ENCODE measurements at regions of chr5 and their contacts with region 1.

Region 1: DNA sequence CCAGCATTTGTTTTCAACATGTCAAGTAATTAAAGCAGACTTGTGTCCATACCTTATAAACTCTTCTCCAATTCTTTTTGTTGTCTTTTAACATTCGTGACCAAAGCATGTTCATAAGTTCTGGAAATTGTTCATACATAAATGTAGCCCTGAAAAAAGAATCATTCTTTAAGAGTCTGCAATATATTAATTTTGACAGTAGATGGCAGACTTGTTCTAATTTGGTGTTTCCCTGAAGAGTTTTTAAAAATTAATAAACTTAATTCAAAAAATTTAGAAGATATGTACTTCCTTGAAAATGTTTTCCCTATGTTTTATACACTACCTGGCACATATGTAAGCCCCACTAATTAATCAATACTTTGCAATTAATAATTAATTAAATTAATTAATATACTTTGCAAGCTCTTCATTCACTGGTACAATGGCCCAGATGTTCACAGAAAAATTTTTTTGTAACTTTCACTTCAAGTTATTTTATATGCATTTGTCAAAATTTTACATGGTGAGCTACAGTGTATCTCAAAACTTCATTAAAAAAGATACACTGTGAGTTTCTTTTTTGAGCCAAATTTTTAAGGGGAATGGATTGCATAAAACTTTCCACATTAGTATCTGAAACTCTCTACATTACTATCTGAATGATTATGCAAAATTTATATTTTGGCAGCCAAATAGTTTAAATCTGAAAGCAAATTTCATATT is 42.1 kb downstream of the CLINT1 start:
- DNase-seq: no peak
- ATAC-seq: no peak
- H3K4me3 ChIP-seq: no peak overlapping the region
- H3K27ac ChIP-seq: no peak overlapping the region
- H3K4me1 ChIP-seq: peaks cover 4% of the 10 kb centered on the region
- H3K27me3 ChIP-seq: no peaks in the 10 kb centered on the region
- CTCF ChIP-seq: peak; percentile 60

Region 2: GRCh38 chr5:157994906-157995519 is 178.2 kb after region 1 on chr5:
- intact Hi-C with region 1: loop called (anchors 10 kb)
- DNase-seq: peak; percentile 79
- ATAC-seq: peak; percentile 98
- H3K4me3 ChIP-seq: no peak overlapping the region
- H3K27ac ChIP-seq: no peak overlapping the region
- H3K4me1 ChIP-seq: peaks cover 4% of the 10 kb centered on the region
- H3K27me3 ChIP-seq: no peaks in the 10 kb centered on the region
- CTCF ChIP-seq: peak; percentile 74

Region 3: DNA sequence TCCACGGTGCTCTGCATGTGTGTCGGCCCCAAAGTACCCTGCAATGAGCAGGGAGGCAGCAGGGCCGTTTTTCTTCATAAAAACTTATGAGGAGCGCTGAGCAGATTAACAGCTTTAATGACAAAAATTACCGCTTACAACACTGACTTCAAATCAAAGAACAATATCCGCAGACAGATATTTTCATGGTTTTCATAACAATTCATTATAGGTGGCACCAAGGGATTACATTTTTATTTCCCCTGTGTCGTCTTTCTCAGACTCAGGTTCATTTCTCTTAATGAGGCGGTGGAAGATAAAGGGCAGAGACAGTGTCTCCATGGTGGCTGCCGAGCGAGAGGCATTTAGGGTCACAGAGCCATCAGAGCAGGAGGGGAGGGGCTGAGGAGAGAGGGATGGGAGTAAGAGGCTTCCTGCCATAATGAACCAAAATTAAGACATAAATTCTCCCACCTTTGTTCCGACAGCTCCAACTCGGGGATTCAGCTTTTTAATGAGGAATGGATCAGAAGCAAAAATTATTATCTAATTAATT is 282.8 kb after region 1 on chr5:
- intact Hi-C with region 1: no loop called
- DNase-seq: no peak
- ATAC-seq: no peak
- H3K4me3 ChIP-seq: no peak overlapping the region
- H3K27ac ChIP-seq: no peak overlapping the region
- H3K4me1 ChIP-seq: no peaks in the 10 kb centered on the region
- H3K27me3 ChIP-seq: no peaks in the 10 kb centered on the region
- CTCF ChIP-seq: no peak

Measured in upper lobe of right lung (tissue), 1 donor.